Esophagus squamous epithelium (tissue), 5 donors: ENCODE measurements at regions of chr10 and their contacts with region 1.

Region 1: GRCh38 chr10:21273400-21273932 is 252.0 kb downstream of the SKIDA1 start:
- DNase-seq: no peak
- H3K4me3 ChIP-seq: no peak overlapping the region
- H3K27ac ChIP-seq: no peak overlapping the region
- H3K4me1 ChIP-seq: no peaks in the 10 kb centered on the region
- H3K27me3 ChIP-seq: no peaks in the 10 kb centered on the region
- CTCF ChIP-seq: no peak
- POLR2A ChIP-seq: no peak

Region 2: DNA sequence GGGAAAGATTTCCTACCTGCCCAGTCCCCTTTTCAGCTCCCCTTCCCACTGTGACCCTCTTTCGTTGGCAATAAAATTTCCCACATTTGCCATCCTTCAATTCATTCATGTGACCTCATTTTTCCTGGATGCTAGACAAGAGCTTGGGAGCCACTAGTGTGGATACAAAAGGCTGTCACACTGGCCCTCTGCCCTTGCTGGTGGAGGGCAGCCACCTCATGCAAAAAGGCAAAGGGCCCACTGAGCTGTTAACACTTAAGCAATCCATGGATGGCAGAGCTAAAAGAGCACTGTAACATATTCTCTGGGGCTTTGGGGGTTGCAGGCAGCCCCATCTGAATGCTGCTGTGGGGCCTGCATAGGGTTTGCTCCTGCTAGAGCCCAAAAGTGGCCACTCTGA is 691.4 kb before region 1 on chr10:
- intact Hi-C with region 1: no loop called
- DNase-seq: no peak
- H3K4me3 ChIP-seq: no peak overlapping the region
- H3K27ac ChIP-seq: no peak overlapping the region
- H3K4me1 ChIP-seq: no peaks in the 10 kb centered on the region
- H3K27me3 ChIP-seq: no peaks in the 10 kb centered on the region
- CTCF ChIP-seq: no peak
- POLR2A ChIP-seq: no peak

Region 3: DNA sequence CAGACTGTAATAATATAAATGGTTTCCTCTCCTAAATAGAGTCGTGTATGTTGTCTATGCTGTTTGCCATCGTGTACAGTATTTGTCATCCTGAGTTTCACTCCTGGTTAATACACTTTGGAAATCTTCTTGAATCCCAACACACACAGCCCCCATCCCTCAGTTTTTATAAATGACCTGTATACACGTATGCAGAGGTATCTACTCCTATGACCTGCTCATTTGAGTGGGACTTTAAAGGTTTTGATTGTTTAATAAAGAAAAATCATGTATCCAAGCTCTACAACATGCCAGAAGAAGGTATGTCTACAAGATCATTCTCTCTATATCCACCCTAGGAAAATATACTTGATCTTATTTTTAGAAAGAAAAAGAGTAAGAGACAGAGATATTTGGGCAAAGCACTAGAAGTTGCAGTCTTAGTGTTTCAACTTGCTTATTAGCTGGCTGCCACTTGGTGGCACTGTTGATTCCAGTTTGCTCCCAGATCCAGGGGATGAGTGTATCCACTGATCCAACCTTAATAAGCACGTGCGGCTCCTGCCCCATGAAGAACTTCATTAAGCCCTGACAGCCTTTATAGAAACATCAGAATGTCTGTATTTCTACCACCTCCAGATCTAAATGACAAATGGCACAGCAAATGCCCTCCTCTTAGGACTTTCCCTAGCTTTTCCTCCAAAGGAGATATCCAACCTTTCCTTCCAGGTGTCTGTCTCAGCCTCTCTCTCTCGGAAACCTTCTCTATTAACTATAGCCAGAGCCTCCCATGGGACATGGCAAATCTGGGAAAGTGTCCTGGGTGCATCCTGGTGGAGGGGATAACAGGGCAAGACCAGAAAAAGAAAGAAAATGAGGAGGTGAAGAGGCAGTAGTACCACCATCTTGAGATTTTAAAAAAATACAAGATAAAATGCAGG is 194.8 kb before region 1 on chr10:
- intact Hi-C with region 1: loop called (anchors 5 kb)
- DNase-seq: no peak
- H3K4me3 ChIP-seq: no peak overlapping the region
- H3K27ac ChIP-seq: no peak overlapping the region
- H3K4me1 ChIP-seq: peaks cover 0 to 10% (median 0%) of the 10 kb centered on the region in 3 donors
- H3K27me3 ChIP-seq: no peaks in the 10 kb centered on the region
- CTCF ChIP-seq: peak; percentile 49 to 80 (median 66)
- POLR2A ChIP-seq: no peak

Region 4: DNA sequence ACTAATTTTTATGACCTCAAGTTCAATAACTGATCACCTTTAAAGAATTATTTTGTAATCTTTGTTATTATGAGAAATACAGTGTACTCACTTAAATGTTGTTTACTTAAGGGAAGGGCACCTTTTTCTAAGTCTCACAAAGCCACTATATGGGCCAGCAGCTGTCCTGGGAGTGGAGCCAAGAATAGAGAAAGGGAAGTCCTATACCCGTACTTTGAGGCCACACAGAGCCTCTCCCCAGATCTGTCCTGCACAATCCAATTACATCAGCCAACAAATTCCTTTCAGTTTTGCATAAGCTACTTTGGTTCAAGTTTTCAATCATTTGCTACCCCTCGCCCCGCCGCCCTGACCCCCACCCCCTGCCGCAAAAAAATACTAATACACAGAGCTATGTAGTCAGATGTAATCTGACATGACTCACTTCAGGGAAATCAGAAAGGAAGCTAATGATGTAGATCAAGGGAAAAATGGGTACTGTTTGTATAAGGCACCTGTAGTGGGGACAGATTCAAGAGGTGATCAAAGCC is 78.9 kb before region 1 on chr10:
- intact Hi-C with region 1: no loop called
- DNase-seq: no peak
- H3K4me3 ChIP-seq: no peak overlapping the region
- H3K27ac ChIP-seq: peak overlapping the region; percentile 15 to 66 (median 48)
- H3K4me1 ChIP-seq: peaks cover 0 to 29% (median 0%) of the 10 kb centered on the region in 3 donors
- H3K27me3 ChIP-seq: no peaks in the 10 kb centered on the region
- CTCF ChIP-seq: no peak
- POLR2A ChIP-seq: no peak